ENCODE measurements at regions of chr7 and their contacts with region 1.

Region 1: DNA sequence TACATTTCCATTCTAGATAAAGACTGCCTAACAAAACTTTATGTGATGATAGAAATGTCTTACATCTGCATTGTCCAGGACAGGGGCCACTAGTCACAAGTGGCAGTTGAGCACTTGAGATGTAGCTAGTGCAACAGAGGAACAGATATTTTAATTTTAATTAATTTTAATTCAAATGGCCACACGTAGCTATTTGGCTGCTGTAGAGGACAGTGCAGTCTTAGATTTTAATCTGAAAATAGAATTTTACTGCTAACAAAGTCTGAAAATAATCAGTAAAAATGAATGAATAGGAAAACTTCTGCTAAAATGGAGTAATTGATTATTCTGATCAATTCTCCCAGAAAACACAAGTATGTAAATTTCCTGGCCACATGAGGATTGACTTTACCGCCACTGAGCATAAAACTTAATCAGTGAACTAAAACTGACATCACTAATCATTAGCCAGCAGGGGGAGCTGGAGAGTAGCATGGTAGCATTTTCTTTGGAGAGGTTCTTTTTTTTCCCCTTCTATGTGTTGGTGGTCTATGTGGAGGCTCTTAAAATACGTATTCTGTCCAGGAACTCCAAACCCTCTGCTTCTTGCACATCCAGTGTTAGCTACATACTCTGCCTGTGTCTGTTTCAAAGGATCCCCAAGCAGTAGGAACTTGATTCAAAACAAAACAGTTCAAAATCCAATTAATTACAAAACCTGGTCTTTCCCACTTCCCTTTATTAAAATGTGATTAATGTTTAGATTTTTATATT is 52.1 kb downstream of the TSPAN12 start:
- DNase-seq: peak; percentile 48
- H3K4me3 Mint-ChIP-seq: no peak overlapping the region
- H3K27ac Mint-ChIP-seq: no peak overlapping the region
- H3K4me1 Mint-ChIP-seq: no peaks in the 10 kb centered on the region
- H3K27me3 Mint-ChIP-seq: peaks cover 6% of the 10 kb centered on the region

Region 2: GRCh38 chr7:120792091-120792860 is 13.5 kb before region 1 on chr7:
- CTCF ChIA-PET with region 1: interaction called, 114 read pairs
- POLR2A ChIA-PET with region 1: no interaction called
- intact Hi-C with region 1: no loop called
- DNase-seq: peak; percentile 71
- H3K4me3 Mint-ChIP-seq: no peak overlapping the region
- H3K27ac Mint-ChIP-seq: no peak overlapping the region
- H3K4me1 Mint-ChIP-seq: no peaks in the 10 kb centered on the region
- H3K27me3 Mint-ChIP-seq: no peaks in the 10 kb centered on the region

Region 3: GRCh38 chr7:120819863-120820262 is 14.1 kb after region 1 on chr7:
- CTCF ChIA-PET with region 1: interaction called, 14 read pairs
- POLR2A ChIA-PET with region 1: no interaction called
- intact Hi-C with region 1: no loop called
- DNase-seq: no peak
- H3K4me3 Mint-ChIP-seq: no peak overlapping the region
- H3K27ac Mint-ChIP-seq: no peak overlapping the region
- H3K4me1 Mint-ChIP-seq: no peaks in the 10 kb centered on the region
- H3K27me3 Mint-ChIP-seq: peaks cover 17% of the 10 kb centered on the region

Region 4: GRCh38 chr7:120857588-120858573 is 52.1 kb after region 1 on chr7 and contains the start of gene TSPAN12:
- CTCF ChIA-PET with region 1: interaction called, 3 read pairs
- POLR2A ChIA-PET with region 1: no interaction called
- intact Hi-C with region 1: loop called (anchors 2 kb)
- DNase-seq: peak; percentile 62
- H3K4me3 Mint-ChIP-seq: peak within 1 kb of the TSS; percentile 70
- H3K27ac Mint-ChIP-seq: no peak within 1 kb of the TSS
- H3K4me1 Mint-ChIP-seq: peaks cover 9% of the 10 kb centered on the region
- H3K27me3 Mint-ChIP-seq: peaks cover 54% of the 10 kb centered on the region
- total RNA-seq, gene TSPAN12: not detected

Region 5: DNA sequence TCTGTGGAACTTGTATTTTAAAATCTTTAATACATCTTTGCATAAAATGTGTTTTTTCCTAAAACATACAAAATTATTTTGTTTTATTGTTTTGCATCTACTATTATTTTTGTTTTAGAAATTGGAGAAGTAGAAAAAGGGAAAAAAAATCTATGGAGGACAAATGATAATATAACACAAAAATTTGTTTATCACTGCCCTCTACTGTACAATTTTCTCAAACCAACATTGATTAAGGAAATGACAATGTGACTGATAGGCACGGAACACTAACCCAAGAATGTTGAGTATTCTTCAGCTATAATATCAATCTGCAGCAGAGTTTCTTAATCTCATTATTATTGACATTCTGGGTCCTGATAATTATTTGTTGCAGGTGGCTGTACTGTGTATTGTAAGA is 135.3 kb after region 1 on chr7:
- CTCF ChIA-PET with region 1: interaction called, 5 read pairs
- POLR2A ChIA-PET with region 1: no interaction called
- intact Hi-C with region 1: loop called (anchors 1 kb)
- DNase-seq: no peak
- H3K4me3 Mint-ChIP-seq: no peak overlapping the region
- H3K27ac Mint-ChIP-seq: no peak overlapping the region
- H3K4me1 Mint-ChIP-seq: no peaks in the 10 kb centered on the region
- H3K27me3 Mint-ChIP-seq: no peaks in the 10 kb centered on the region

Region 6: GRCh38 chr7:121081327-121081936 is 275.6 kb after region 1 on chr7:
- CTCF ChIA-PET with region 1: interaction called, 28 read pairs
- POLR2A ChIA-PET with region 1: no interaction called
- intact Hi-C with region 1: loop called (anchors 1 kb)
- DNase-seq: no peak
- H3K4me3 Mint-ChIP-seq: no peak overlapping the region
- H3K27ac Mint-ChIP-seq: no peak overlapping the region
- H3K4me1 Mint-ChIP-seq: no peaks in the 10 kb centered on the region
- H3K27me3 Mint-ChIP-seq: peaks cover 28% of the 10 kb centered on the region

Region 7: GRCh38 chr7:121107923-121108498 is 302.2 kb after region 1 on chr7:
- CTCF ChIA-PET with region 1: interaction called, 18 read pairs
- POLR2A ChIA-PET with region 1: no interaction called
- intact Hi-C with region 1: loop called (anchors 1 kb)
- DNase-seq: no peak
- H3K4me3 Mint-ChIP-seq: no peak overlapping the region
- H3K27ac Mint-ChIP-seq: no peak overlapping the region
- H3K4me1 Mint-ChIP-seq: no peaks in the 10 kb centered on the region
- H3K27me3 Mint-ChIP-seq: peaks cover 6% of the 10 kb centered on the region